Gastrocnemius medialis (tissue), 4 donors: ENCODE measurements at regions of chr2 and their contacts with region 1.

Region 1: DNA sequence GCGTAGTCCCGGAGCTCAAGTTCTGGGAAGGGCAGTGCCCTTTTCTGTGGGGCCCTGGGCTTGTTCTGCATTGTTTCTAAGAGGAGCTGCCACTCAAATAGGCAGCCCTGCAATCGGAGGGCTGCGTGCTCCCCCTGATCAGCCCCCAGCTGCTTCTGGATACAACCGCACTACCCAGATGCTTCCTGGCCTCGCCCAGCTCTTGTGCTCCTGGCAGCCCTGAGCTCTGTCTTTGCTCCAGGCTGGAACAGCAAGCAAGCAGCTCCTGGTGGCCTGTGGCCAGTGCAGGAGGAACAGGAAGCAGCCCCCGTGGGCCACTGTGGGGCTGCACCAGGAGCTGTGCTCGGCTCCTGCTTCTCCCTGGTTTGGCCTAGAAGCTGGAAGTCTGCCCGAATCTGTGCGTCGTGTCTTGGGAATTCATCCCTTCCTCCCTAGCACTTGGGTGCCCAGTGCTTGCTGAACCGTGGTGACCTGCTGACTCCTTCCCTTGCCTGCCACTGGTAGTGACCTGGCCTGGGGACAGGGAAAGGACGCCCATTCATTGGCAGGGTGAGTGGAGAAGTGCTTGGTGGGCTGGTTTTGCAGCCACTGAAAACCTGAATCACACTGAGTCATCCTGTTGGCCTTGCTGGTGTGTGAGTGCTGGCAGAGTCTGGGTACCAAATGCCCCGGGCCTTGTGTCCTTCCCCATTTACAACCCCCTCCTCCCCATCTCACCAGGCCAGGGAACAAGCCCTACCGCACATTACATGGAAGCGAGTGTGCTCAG is 27.3 kb upstream of the NTSR2 start:
- DNase-seq: peak; percentile 90 to 98
- ATAC-seq: peak; percentile 56 to 58
- H3K4me3 ChIP-seq: peak overlapping the region; percentile 27 to 44 (median 41)
- H3K27ac ChIP-seq: peak overlapping the region; percentile 93 to 100 (median 98)
- H3K4me1 ChIP-seq: peaks cover 60 to 65% of the 10 kb centered on the region in 2 donors
- H3K27me3 ChIP-seq: no peaks in the 10 kb centered on the region
- CTCF ChIP-seq: no peak
- POLR2A ChIP-seq: no peak

Region 2: GRCh38 chr2:11681722-11682589 is 15.3 kb before region 1 on chr2:
- in situ Hi-C with region 1: no loop called
- intact Hi-C with region 1: loop called (anchors 1 kb)
- DNase-seq: peak; percentile 59 to 82
- ATAC-seq: peak; percentile 9 to 30
- H3K4me3 ChIP-seq: peak overlapping the region in 2 of 4 donors; percentile 22 to 63
- H3K27ac ChIP-seq: peak overlapping the region; percentile 92 to 100 (median 93)
- H3K4me1 ChIP-seq: peaks cover 54 to 80% of the 10 kb centered on the region in 2 donors
- H3K27me3 ChIP-seq: no peaks in the 10 kb centered on the region
- CTCF ChIP-seq: peak; percentile 91 to 99 (median 98)
- POLR2A ChIP-seq: peak in 1 of 2 donors; percentile 22

Region 3: DNA sequence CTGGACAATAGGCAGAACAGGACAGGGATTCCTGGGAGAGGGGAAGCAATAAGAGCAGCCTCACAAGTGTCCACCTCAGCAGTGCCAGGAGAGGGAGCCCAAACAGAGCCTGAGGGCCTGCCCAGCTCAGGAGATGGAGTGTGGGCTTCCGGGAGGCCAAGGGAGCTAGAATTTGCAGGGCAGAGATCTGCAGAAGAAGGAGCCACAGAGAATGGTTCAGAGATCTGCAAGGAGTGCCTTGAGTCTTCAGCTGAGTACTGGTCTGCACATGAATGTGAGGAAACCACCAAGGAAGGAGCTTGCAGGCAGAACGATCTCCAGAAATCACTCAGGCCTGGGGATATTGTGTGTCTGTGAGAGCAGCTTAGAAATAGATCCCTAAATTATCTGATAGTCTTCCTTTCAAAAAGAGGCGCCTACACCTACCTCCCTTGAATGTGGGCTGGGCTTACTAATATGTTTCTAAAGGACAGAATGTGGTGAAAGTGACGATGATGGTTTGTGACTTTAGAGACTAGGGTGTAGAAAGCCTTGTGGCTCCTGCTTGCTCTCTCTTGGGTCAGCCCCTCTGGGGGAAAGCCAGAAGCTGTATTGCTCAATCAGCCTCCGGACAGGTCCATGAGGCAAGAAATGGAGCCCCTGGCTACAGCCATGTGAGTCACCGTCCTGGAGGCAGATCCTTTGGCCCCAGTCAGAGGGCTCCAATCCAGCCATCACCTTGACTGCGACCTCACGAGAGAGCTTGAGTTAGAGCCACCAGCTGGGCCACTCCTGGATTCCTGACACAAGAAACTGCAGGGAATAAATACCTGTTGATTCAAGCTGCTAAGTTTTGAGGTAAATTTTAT is 41.5 kb after region 1 on chr2:
- in situ Hi-C with region 1: loop called in 3 of 4 experiments (anchors 5 to 10 kb)
- intact Hi-C with region 1: loop called (anchors 1 kb)
- DNase-seq: peak; percentile 96 to 99
- ATAC-seq: peak; percentile 93 to 94
- H3K4me3 ChIP-seq: no peak overlapping the region
- H3K27ac ChIP-seq: peak overlapping the region; percentile 85 to 90 (median 88)
- H3K4me1 ChIP-seq: peaks cover 17 to 23% of the 10 kb centered on the region in 2 donors
- H3K27me3 ChIP-seq: no peaks in the 10 kb centered on the region
- CTCF ChIP-seq: peak; percentile 34 to 60 (median 55)
- POLR2A ChIP-seq: peak in 1 of 2 donors; percentile 37

Region 4: DNA sequence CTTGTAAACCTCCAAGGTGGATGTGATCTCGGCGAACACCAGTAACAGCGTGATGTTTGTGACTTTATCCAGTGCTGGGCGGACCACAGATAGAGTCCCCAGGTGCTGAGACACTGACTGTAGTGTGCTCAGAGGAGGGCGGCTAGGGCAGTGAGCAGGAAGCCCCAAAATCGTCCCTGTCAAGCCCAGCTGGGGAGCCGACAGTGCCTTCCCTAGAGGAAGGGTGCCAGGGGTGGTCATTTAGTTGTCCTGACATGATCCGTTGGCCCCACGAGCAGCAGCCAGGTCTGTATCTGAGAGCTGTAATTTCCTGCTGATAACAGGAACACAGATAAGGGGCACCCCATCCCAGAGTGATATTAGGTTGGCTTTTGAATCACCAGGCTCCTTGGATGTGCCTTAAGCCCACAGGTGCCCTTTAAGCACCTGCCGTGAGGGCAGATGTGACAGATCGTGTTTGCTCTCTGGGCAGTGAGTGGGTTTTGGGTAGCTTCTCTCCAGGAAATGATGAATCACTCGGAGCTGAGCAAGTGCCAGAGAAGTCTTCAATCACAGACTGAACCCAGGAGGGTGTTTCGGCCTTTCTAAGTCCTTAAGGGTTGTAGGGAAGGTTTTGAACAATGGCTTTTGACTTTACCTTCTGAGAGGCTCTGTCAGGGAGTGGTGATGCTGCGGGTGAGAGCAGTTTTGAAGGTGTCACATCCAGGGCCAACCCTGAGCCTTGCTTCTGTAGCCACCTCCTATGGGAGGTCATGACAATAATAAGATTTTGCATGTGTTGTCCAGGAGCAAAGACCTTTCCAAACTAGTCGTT is 56.8 kb after region 1 on chr2:
- in situ Hi-C with region 1: loop called in 2 of 4 experiments (anchors 10 kb)
- intact Hi-C with region 1: loop called (anchors 1 kb)
- DNase-seq: peak; percentile 71 to 83
- ATAC-seq: peak; percentile 80 to 81
- H3K4me3 ChIP-seq: peak overlapping the region; percentile 3 to 39 (median 20)
- H3K27ac ChIP-seq: peak overlapping the region; percentile 82 to 95 (median 93)
- H3K4me1 ChIP-seq: peaks cover 78 to 79% of the 10 kb centered on the region in 2 donors
- H3K27me3 ChIP-seq: no peaks in the 10 kb centered on the region
- CTCF ChIP-seq: no peak
- POLR2A ChIP-seq: peak in 1 of 2 donors; percentile 37

Region 5: GRCh38 chr2:11778923-11779757 is 81.9 kb after region 1 on chr2:
- in situ Hi-C with region 1: loop called in 2 of 4 experiments (anchors 5 kb)
- intact Hi-C with region 1: loop called (anchors 1 kb)
- DNase-seq: peak; percentile 59 to 76
- ATAC-seq: peak; percentile 72 to 87
- H3K4me3 ChIP-seq: no peak overlapping the region
- H3K27ac ChIP-seq: peak overlapping the region; percentile 58 to 70 (median 66)
- H3K4me1 ChIP-seq: peaks cover 40 to 51% of the 10 kb centered on the region in 2 donors
- H3K27me3 ChIP-seq: no peaks in the 10 kb centered on the region
- CTCF ChIP-seq: peak; percentile 97 to 99 (median 98)
- POLR2A ChIP-seq: no peak

Region 6: GRCh38 chr2:11822746-11823451 is 125.6 kb after region 1 on chr2:
- in situ Hi-C with region 1: no loop called
- intact Hi-C with region 1: no loop called
- DNase-seq: peak; percentile 83 to 87
- ATAC-seq: peak; percentile 91 to 96
- H3K4me3 ChIP-seq: peak overlapping the region in 1 of 4 donors; percentile 34
- H3K27ac ChIP-seq: peak overlapping the region; percentile 71 to 83 (median 76)
- H3K4me1 ChIP-seq: peaks cover 27 to 34% of the 10 kb centered on the region in 2 donors
- H3K27me3 ChIP-seq: no peaks in the 10 kb centered on the region
- CTCF ChIP-seq: no peak
- POLR2A ChIP-seq: no peak